ENCODE measurements at regions of chr19 and their contacts with region 1.

Region 1: GRCh38 chr19:47190167-47190727 is 40.8 kb downstream of the BBC3 start:
- DNase-seq: peak; percentile 84
- ATAC-seq: peak; percentile 57
- H3K4me3 Mint-ChIP-seq: peak overlapping the region; percentile 48
- H3K27ac Mint-ChIP-seq: peak overlapping the region; percentile 84
- H3K4me1 Mint-ChIP-seq: peaks cover 71% of the 10 kb centered on the region
- H3K27me3 Mint-ChIP-seq: no peaks in the 10 kb centered on the region

Region 2: GRCh38 chr19:47145639-47146486 is 44.4 kb before region 1 on chr19:
- CTCF ChIA-PET with region 1: interaction called, 9 read pairs
- POLR2A ChIA-PET with region 1: interaction called, 10 read pairs
- intact Hi-C with region 1: loop called (anchors 5 kb)
- DNase-seq: no peak
- ATAC-seq: peak; percentile 24
- H3K4me3 Mint-ChIP-seq: no peak overlapping the region
- H3K27ac Mint-ChIP-seq: peak overlapping the region; percentile 89
- H3K4me1 Mint-ChIP-seq: peaks cover 83% of the 10 kb centered on the region
- H3K27me3 Mint-ChIP-seq: no peaks in the 10 kb centered on the region

Region 3: DNA sequence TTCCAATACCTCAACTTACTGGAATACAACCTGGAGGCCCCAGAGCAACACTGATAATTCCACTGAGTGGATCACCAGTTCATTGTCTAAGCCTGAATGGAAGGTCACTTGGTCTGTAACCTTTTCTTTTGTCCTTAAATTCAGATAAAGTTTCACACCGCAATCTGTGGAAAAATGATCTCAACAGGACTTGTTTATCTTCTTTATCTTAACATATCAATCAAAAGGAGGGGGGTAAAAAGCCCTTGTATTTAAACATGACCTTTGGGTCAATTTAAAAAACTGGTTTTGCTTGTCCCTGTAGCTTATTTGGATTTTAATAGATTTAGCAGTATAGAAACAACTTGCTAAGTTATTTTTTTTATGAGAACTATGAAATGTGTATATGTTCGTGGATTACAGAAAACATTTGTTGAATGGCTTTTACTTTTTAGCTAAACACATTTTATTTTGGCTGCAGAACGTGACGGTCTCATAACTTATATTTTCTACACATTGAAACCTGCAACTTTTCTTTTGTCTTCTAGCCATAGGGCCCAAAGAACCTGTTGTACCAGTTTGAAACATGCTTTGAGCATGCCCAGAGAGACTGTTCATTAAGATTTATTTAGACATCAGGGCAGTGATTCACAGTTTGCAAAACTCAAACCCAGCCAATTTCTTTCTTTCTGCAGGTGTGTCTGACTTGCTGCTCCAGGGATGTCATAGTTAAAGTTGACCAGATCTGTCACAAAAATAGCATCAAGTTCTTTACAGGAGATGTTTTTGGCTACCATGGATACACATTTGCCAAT is 37.8 kb before region 1 on chr19:
- CTCF ChIA-PET with region 1: interaction called, 43 read pairs
- POLR2A ChIA-PET with region 1: interaction called, 10 read pairs
- intact Hi-C with region 1: loop called (anchors 5 kb)
- DNase-seq: no peak
- ATAC-seq: no peak
- H3K4me3 Mint-ChIP-seq: no peak overlapping the region
- H3K27ac Mint-ChIP-seq: no peak overlapping the region
- H3K4me1 Mint-ChIP-seq: peaks cover 55% of the 10 kb centered on the region
- H3K27me3 Mint-ChIP-seq: no peaks in the 10 kb centered on the region

Region 4: GRCh38 chr19:47157431-47158321 is 32.6 kb before region 1 on chr19:
- CTCF ChIA-PET with region 1: interaction called, 43 read pairs
- POLR2A ChIA-PET with region 1: interaction called, 15 read pairs
- intact Hi-C with region 1: loop called (anchors 1 kb)
- DNase-seq: peak; percentile 54
- ATAC-seq: no peak
- H3K4me3 Mint-ChIP-seq: peak overlapping the region; percentile 58
- H3K27ac Mint-ChIP-seq: peak overlapping the region; percentile 93
- H3K4me1 Mint-ChIP-seq: peaks cover 75% of the 10 kb centered on the region
- H3K27me3 Mint-ChIP-seq: no peaks in the 10 kb centered on the region

Region 5: GRCh38 chr19:47176627-47177090 is 13.6 kb before region 1 on chr19:
- CTCF ChIA-PET with region 1: interaction called, 24 read pairs
- POLR2A ChIA-PET with region 1: interaction called, 42 read pairs
- intact Hi-C with region 1: loop called (anchors 1 kb)
- DNase-seq: peak; percentile 63
- ATAC-seq: peak; percentile 86
- H3K4me3 Mint-ChIP-seq: peak overlapping the region; percentile 18
- H3K27ac Mint-ChIP-seq: peak overlapping the region; percentile 94
- H3K4me1 Mint-ChIP-seq: peaks cover 69% of the 10 kb centered on the region
- H3K27me3 Mint-ChIP-seq: no peaks in the 10 kb centered on the region

Region 6: DNA sequence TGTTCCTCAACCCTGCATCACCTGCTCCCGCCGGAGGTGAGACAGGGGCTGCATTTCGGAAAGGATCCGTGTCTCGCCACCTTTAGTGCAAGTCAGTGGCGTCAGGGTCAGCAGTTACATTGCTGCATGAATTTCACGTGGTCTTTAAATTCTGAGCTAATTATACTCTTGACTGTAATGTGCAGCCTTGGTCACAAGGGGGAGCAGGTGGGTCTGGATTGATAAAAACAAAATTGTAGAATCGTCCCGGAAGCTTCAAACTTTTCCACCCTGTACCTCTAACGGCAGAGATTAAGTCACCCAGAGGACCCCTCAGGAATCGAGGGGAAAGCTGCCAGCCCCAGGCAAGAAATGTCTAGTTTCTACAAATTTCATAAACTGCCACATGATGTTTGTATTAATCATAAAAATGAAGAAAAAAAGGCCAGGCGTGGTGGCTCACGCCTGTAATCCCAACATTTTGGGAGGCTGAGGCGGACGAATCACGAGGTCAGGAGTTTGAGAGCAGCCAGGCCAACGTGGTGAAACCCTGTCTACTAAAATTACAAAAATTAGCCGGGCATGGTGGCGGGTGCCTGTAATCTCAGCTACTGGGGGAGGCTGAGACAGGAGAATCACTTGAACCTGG is 20.6 kb after region 1 on chr19:
- CTCF ChIA-PET with region 1: interaction called, 27 read pairs
- POLR2A ChIA-PET with region 1: interaction called, 9 read pairs
- intact Hi-C with region 1: no loop called
- DNase-seq: peak; percentile 89
- ATAC-seq: peak; percentile 87
- H3K4me3 Mint-ChIP-seq: no peak overlapping the region
- H3K27ac Mint-ChIP-seq: peak overlapping the region; percentile 91
- H3K4me1 Mint-ChIP-seq: peaks cover 9% of the 10 kb centered on the region
- H3K27me3 Mint-ChIP-seq: no peaks in the 10 kb centered on the region

Region 7: DNA sequence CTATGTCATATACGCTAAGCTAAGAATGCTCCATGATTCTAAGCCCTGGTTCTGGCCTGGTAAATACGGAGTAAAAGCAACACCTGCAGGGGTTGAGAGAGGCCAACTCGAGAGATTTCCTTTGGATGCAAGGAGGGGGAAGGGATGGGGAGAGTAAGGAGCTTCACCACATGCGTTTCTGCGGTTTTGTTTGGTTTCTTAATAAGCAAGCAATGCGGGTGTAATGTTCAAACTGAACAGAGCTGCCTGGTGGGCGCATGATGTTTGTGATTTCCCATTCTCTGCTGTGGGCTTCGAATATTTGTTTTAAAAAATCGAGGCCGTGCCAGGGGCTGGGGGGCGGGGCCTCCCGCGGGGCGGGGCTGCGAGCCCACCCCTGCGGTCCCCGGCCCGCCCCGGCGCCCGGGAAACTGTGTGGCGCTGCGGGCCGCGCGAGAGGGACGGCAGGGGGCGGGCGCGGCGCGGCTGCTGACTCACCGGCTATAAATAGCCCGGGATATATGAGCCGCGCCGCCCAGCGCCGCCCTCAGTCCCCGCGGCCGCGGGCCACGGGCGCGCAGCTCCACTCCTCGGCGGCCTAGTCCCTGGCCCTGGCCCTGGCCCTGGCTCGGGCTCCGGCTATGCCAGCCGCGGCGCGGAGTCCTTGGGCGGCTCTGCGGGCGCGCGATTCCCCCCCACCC is 35.6 kb after region 1 on chr19:
- CTCF ChIA-PET with region 1: interaction called, 3 read pairs
- POLR2A ChIA-PET with region 1: interaction called, 10 read pairs
- intact Hi-C with region 1: loop called (anchors 1 to 2 kb)
- DNase-seq: peak; percentile 93
- ATAC-seq: peak; percentile 70
- H3K4me3 Mint-ChIP-seq: peak overlapping the region; percentile 77
- H3K27ac Mint-ChIP-seq: no peak overlapping the region
- H3K4me1 Mint-ChIP-seq: peaks cover 16% of the 10 kb centered on the region
- H3K27me3 Mint-ChIP-seq: no peaks in the 10 kb centered on the region

Measured in activated CD4-positive, alpha-beta T cell treated with anti-CD3 and anti-CD28 coated beads for 36 hours (primary cell).